Head of caudate nucleus (tissue), 42 donors: ENCODE measurements at regions of chr6 and their contacts with region 1.

Region 1: GRCh38 chr6:97394160-97394748 is 111.2 kb upstream of the MMS22L start:
- DNase-seq: peak in 34 of 42 donors; percentile 4 to 84 (median 52)

Region 2: GRCh38 chr6:97068211-97068610 is 326.0 kb before region 1 on chr6:
- intact Hi-C with region 1: loop called (anchors 10 kb)
- DNase-seq: peak in 7 of 42 donors; percentile 18 to 63 (median 40)

Region 3: DNA sequence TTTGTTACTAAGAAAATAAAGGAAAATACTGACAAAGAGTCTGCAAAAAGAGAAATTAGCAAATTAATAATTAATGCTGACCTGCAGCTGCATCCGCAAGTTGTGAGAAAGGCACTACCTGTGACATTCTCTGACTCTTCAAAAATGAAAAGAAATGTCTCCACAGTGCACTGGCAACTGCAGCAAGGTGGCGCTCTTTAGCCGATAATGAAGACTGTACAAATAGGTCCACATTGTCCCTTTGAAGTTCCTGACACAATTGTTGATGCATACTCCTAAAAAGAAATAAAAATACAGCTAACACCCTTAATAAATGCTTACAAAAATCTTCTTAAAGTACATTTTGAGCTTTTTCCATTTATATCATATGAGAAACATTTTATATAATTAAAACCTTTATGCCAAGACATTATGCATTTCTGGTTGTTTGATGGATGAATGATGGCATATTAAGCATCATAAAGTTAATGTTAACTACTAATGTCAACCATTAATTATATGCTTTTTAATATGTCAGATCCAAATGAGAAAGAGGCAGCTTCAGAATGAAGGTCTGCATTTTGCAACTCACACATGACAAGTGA is 207.7 kb before region 1 on chr6:
- intact Hi-C with region 1: loop called (anchors 10 kb)
- DNase-seq: peak; percentile 44 to 93 (median 80)